Activated B cell treated with CpG ODN at 0.5 μM for 24 hours (primary cell): ENCODE measurements at regions of chr12 and their contacts with region 1.

Region 1: DNA sequence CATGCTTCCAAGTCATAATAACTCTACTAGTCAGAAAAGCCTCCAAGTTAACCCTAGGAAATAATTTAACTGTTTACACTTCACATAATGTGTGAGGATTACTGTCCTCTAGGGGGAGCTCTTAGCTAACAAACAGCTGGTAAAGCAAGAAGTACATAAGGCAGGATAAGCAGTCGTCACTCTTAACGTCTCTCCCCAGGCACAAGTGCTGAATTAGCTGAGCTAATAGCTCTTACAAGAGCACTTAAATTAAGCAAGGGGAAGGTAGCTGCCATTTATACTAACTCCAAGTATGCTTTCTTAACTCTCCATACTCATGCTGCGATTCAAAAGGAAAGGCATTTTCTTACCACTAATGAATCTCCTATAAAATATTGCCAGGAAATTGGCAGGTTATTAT is 79.3 kb upstream of the TSPAN11 start:
- DNase-seq: no peak
- ATAC-seq: no peak
- H3K4me3 Mint-ChIP-seq: no peak overlapping the region
- H3K27ac Mint-ChIP-seq: no peak overlapping the region
- H3K4me1 Mint-ChIP-seq: peaks cover 10% of the 10 kb centered on the region
- H3K27me3 Mint-ChIP-seq: no peaks in the 10 kb centered on the region
- CTCF ChIP-seq: peak; percentile 51

Region 2: DNA sequence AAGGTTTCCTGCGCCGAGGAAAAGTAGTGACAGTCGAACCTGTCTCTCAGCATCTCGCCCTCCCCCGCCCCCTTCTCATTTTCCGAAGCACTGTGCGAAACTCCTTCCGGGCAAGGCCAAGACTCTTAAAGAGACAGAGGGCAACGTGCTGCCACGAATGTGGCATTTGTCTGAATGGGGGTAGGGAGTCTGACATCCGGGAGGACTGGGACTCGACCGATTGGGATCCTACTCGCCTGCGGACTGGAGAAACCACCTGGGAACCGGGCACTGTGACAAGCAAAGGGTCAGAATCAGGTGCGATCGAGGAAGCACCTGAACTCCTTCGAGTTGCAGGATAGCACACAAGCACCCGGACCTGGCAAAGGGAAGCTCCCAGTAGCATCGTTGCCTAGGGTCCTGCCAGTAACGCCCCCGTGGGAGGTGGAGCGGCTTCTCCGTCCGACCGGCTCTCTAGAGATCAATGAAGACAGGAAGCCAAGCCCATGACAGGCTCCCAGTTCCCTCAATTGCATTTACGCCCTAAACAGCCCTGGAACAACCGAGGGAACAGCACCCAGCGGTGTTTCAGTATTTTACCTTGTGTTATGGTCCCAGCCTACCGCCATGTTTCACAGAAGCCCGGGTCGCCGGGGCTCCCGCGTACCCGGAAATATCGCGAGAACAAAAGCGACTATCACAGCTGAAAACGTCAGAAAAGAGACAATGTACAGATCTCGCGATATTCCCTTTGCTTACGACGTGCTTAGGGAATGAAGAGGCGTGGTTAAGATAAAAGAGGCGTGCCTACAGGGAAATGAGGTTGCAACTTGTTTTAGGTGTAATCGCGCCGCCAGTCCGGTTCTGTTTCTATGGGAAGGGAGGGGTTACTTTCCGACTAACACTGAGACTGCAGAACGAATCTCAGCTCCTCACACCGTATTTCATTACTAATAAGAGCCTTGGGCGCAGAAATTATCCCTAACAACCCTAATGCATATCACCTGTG is 1466.4 kb before region 1 on chr12 and contains the start of gene ERGIC2:
- CTCF ChIA-PET with region 1: no interaction called
- POLR2A ChIA-PET with region 1: no interaction called
- intact Hi-C with region 1: loop called (anchors 1 kb)
- DNase-seq: peak; percentile 73
- ATAC-seq: peak; percentile 94
- H3K4me3 Mint-ChIP-seq: peak within 1 kb of the TSS; percentile 94
- H3K27ac Mint-ChIP-seq: peak within 1 kb of the TSS; percentile 94
- H3K4me1 Mint-ChIP-seq: peaks cover 42% of the 10 kb centered on the region
- H3K27me3 Mint-ChIP-seq: no peaks in the 10 kb centered on the region
- CTCF ChIP-seq: no peak
- total RNA-seq, gene ERGIC2: 43.7 TPM in 2 replicates

Region 3: GRCh38 chr12:29552324-29552927 is 1294.8 kb before region 1 on chr12:
- CTCF ChIA-PET with region 1: interaction called, 4 read pairs
- POLR2A ChIA-PET with region 1: no interaction called
- intact Hi-C with region 1: loop called (anchors 1 kb)
- DNase-seq: no peak
- ATAC-seq: peak; percentile 57
- H3K4me3 Mint-ChIP-seq: no peak overlapping the region
- H3K27ac Mint-ChIP-seq: no peak overlapping the region
- H3K4me1 Mint-ChIP-seq: no peaks in the 10 kb centered on the region
- H3K27me3 Mint-ChIP-seq: no peaks in the 10 kb centered on the region
- CTCF ChIP-seq: no peak

Region 4: GRCh38 chr12:30754709-30755394 is 92.4 kb before region 1 on chr12 and contains the start of gene CAPRIN2:
- CTCF ChIA-PET with region 1: no interaction called
- POLR2A ChIA-PET with region 1: no interaction called
- intact Hi-C with region 1: loop called (anchors 1 kb)
- DNase-seq: peak; percentile 97
- ATAC-seq: peak; percentile 88
- H3K4me3 Mint-ChIP-seq: peak within 1 kb of the TSS; percentile 95
- H3K27ac Mint-ChIP-seq: peak within 1 kb of the TSS; percentile 90
- H3K4me1 Mint-ChIP-seq: peaks cover 20% of the 10 kb centered on the region
- H3K27me3 Mint-ChIP-seq: no peaks in the 10 kb centered on the region
- CTCF ChIP-seq: no peak
- total RNA-seq, gene CAPRIN2: 17.5 and 18.7 TPM in 2 replicates

Region 5: DNA sequence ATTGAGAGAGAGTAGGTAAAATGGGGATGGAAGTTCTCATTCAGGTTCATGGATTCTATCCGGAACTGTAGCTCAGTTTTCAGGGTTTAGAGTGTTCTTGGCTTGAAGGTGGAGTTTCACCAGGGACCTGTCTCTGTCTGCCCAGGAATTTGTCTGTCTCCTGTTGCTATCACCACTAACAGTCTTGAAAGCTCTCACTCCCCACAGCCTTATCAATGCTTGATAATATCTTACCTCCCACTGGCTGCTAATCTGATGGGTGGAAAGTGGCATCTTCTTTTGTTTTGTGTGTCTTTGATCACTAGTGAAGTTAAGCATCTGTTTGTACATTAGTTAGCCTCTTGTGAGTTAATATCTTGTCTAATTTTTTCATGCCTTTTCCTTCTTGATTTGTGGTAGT is 19.0 kb after region 1 on chr12:
- CTCF ChIA-PET with region 1: no interaction called
- POLR2A ChIA-PET with region 1: no interaction called
- intact Hi-C with region 1: no loop called
- DNase-seq: no peak
- ATAC-seq: no peak
- H3K4me3 Mint-ChIP-seq: no peak overlapping the region
- H3K27ac Mint-ChIP-seq: no peak overlapping the region
- H3K4me1 Mint-ChIP-seq: no peaks in the 10 kb centered on the region
- H3K27me3 Mint-ChIP-seq: peaks cover 16% of the 10 kb centered on the region
- CTCF ChIP-seq: no peak

Region 6: DNA sequence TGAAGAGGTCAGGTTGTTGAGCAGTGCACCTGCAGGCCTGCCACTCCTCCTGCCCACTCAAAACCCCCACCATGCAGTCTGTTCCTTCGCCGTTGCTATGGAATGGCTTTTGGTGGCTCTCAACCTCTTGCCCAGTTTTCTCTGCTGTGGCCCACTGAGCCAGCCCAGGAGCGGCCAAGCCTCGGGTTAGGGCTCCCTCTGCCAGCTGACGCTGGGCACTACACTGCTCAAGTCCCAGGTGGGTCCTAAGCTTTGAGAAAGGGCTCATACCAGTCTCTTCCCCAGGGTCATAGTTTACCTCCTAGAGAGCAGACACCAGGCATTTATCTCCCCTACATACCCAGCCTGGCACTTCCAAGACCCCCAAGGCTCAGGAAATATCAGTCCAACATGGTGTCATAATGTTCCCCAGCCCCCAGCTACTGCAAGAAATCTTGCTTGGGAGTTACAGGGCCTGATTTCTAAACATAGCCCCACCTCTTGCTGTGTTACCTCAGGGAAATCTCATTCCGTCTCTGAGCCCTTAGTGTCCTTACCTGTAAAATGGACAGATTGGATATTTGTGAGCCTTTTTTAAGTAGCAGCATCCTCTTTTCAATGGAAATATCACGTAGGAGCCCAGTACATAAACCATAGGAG is 138.7 kb after region 1 on chr12:
- CTCF ChIA-PET with region 1: interaction called, 9 read pairs
- POLR2A ChIA-PET with region 1: no interaction called
- intact Hi-C with region 1: loop called (anchors 1 kb)
- DNase-seq: no peak
- ATAC-seq: peak; percentile 40
- H3K4me3 Mint-ChIP-seq: no peak overlapping the region
- H3K27ac Mint-ChIP-seq: no peak overlapping the region
- H3K4me1 Mint-ChIP-seq: no peaks in the 10 kb centered on the region
- H3K27me3 Mint-ChIP-seq: no peaks in the 10 kb centered on the region
- CTCF ChIP-seq: no peak

Region 7: GRCh38 chr12:31267966-31268365 is 420.7 kb after region 1 on chr12:
- CTCF ChIA-PET with region 1: interaction called, 26 read pairs
- POLR2A ChIA-PET with region 1: no interaction called
- intact Hi-C with region 1: loop called (anchors 1 kb)
- DNase-seq: no peak
- ATAC-seq: no peak
- H3K4me3 Mint-ChIP-seq: no peak overlapping the region
- H3K27ac Mint-ChIP-seq: no peak overlapping the region
- H3K4me1 Mint-ChIP-seq: no peaks in the 10 kb centered on the region
- H3K27me3 Mint-ChIP-seq: no peaks in the 10 kb centered on the region
- CTCF ChIP-seq: no peak